Prostate gland (tissue), 2 donors: ENCODE measurements at regions of chr3 and their contacts with region 1.

Region 1: DNA sequence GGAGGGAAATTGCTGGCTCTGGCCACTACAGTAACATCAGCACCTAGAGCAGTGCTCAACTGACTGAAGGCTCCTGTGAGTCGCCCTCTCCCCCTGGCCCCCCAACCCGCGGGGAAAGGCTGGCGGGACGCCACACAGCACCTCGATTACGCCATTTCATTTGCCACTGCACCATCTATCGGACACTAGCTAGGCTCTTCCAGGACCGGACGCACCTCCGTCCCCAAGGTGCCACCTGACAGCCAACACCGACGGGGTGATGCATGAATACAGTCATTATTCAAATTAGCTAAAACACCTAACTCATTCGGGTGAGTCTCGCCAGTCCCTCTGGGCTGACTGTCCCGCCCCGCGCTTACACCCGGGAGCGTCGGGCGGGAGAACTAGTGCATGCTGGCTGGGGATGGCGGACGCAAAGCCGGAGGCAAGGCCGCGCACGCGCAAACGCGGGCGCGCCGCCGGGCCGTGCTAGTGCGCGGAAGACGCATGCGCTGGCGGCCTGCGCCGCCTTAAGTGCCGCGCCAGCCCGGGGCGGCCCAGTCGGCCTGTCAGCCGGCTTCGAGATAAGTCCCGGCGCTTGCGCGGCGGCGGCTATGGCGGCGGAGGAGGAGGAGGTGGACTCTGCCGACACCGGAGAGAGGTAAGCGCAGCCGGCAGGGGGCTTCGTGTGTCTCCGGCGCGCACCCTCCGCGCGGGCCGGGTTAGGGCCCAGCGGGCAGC is at the start of gene ABHD5:
- DNase-seq: peak; percentile 85
- H3K4me3 ChIP-seq: peak within 1 kb of the TSS; percentile 91 to 96
- H3K27ac ChIP-seq: peak within 1 kb of the TSS; percentile 92 to 94
- H3K4me1 ChIP-seq: no peaks in the 10 kb centered on the region
- H3K27me3 ChIP-seq: no peaks in the 10 kb centered on the region
- CTCF ChIP-seq: peak in 3 of 4 experiments; percentile 24 to 27 (median 26)
- POLR2A ChIP-seq: peak; percentile 99
- total RNA-seq, gene ABHD5: 10.7 to 20.6 TPM

Region 2: DNA sequence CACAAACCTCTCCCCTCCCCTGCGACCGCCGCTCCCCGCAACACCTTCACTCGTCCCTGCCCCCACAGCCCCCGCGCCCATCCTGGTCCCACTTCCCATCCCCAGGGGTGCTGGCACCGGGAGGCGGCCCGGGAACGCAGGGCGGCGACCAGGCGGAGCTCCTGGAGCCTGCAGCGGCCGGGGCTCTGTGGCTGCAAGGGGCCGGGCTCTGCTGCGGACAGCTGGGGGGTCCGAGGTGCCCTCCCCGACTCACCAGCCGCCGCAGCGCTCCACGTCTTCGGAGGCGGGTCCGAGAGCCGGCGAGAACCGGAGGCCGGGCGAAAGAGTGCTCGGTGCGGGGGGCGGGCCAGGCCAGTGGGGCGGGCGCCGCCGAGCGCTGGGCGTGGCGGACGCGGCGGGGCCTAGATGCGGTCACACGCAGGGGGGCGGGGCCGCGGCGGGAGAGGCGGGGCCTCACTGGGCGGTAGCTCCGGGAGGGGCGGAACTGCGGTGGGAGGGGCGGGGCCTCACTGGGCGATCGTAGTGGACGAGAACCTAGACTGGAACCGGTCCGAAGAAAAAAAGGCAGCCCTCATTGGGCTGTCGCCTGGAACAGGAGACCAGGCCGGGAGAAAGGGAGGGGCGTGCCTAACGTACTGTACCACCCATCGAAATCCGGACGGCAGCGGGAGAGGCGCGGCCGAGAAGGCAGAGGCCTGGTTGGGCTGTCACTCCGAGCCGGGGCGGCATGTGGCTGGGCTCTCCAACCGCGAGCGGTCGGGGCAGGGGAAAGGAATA is 68.7 kb before region 1 on chr3 and contains the start of gene ANO10:
- intact Hi-C with region 1: loop called (anchors 5 kb)
- DNase-seq: peak; percentile 99
- H3K4me3 ChIP-seq: peak within 1 kb of the TSS; percentile 86 to 96
- H3K27ac ChIP-seq: peak within 1 kb of the TSS; percentile 85 to 90
- H3K4me1 ChIP-seq: no peaks in the 10 kb centered on the region
- H3K27me3 ChIP-seq: no peaks in the 10 kb centered on the region
- CTCF ChIP-seq: no peak
- POLR2A ChIP-seq: peak; percentile 93
- total RNA-seq, gene ANO10: 12.4 to 17.7 TPM

Region 3: GRCh38 chr3:43670635-43671522 is 19.7 kb before region 1 on chr3:
- intact Hi-C with region 1: no loop called
- DNase-seq: no peak
- H3K4me3 ChIP-seq: no peak overlapping the region
- H3K27ac ChIP-seq: no peak overlapping the region
- H3K4me1 ChIP-seq: no peaks in the 10 kb centered on the region
- H3K27me3 ChIP-seq: no peaks in the 10 kb centered on the region
- CTCF ChIP-seq: no peak
- POLR2A ChIP-seq: no peak

Region 4: GRCh38 chr3:43838877-43839276 is 148.3 kb after region 1 on chr3:
- intact Hi-C with region 1: no loop called
- DNase-seq: no peak
- H3K4me3 ChIP-seq: no peak overlapping the region
- H3K27ac ChIP-seq: no peak overlapping the region
- H3K4me1 ChIP-seq: no peaks in the 10 kb centered on the region
- H3K27me3 ChIP-seq: no peaks in the 10 kb centered on the region
- CTCF ChIP-seq: no peak
- POLR2A ChIP-seq: no peak